ENCODE measurements at regions of chr4 and their contacts with region 1.

Region 1: DNA sequence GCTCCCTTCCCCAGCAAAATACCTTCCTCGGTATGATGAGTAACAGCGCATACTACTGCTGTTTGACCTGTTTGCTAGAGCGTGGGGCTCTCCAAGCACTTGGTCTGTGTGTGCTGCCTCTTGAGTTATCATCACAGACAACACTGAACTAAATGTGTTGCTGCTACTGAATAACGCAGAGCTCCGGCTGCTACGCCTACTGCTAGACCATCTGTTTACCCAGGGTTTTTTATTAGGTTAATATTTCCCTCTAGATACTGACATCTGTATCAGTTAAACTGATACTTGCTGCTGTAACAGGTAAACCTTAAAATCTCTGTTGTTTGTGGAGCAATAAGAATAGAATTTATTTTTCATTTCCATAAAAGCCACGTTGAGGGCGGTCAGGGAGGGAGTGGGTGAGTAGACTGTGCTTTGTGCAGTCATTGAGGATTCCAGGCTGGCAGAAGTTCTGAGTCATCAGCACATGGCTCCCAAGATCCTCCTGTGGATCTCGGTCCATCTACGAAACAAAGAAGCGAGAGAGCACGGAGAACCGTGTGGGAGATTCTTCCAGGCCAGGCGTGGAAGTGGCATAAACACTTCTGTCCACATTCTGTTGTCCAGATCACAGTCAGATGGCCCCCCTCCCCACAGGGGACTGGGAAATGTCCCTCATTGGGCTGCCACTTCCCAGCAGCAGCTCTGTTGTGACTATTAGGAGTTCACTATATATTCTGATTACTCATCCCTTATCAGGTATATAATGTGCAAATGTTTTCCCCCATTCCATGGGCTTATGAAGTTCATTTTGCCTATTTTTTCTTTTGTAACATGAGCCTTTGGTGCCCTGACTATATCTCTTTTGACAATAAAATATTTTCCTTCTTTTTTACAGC is 14.1 kb downstream of the GRK4 start:
- DNase-seq: no peak
- H3K4me3 Mint-ChIP-seq: no peak overlapping the region
- H3K27ac Mint-ChIP-seq: no peak overlapping the region
- H3K4me1 Mint-ChIP-seq: no peaks in the 10 kb centered on the region
- H3K27me3 Mint-ChIP-seq: no peaks in the 10 kb centered on the region

Region 2: DNA sequence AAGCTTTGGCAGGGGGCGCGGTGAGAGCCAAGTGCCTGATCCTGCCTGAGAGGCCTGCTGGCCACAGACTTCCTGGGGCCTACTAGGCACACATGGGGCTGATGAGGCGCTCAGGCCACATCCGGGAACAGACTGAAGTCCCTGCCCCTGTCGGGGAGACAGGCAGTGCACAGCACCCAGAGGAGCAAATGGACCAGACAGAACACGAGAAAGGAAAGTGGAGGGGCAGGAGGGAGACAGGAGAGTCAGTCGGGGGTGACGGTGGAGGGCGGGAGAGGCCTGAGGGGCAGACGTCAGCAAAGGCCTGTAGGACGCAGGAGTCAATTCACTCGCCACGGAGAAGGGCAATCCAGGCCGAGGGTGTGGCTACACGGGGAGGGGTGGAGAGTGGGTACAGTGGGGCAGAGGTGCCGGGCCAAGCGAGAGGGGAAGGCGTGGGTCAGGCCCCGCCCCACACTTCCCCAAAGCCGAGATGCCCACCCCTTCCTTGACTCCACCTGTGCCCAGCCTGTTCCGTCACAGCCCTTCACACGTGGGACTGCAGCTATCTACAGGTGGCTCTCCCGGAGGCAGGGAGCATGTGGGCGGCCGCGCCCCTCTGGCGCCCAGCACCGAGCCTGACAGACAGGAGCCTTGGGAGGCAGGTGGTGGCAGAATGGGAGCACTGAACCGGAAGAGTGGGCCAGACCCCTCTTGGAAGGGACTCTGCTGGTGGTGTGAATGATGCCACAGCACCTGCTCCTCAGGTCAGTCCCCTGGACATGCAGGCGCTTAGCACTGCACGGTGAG is 34.7 kb before region 1 on chr4:
- CTCF ChIA-PET with region 1: no interaction called
- POLR2A ChIA-PET with region 1: no interaction called
- DNase-seq: no peak
- H3K4me3 Mint-ChIP-seq: no peak overlapping the region
- H3K27ac Mint-ChIP-seq: peak overlapping the region; percentile 71
- H3K4me1 Mint-ChIP-seq: peaks cover 15% of the 10 kb centered on the region
- H3K27me3 Mint-ChIP-seq: no peaks in the 10 kb centered on the region

Region 3: DNA sequence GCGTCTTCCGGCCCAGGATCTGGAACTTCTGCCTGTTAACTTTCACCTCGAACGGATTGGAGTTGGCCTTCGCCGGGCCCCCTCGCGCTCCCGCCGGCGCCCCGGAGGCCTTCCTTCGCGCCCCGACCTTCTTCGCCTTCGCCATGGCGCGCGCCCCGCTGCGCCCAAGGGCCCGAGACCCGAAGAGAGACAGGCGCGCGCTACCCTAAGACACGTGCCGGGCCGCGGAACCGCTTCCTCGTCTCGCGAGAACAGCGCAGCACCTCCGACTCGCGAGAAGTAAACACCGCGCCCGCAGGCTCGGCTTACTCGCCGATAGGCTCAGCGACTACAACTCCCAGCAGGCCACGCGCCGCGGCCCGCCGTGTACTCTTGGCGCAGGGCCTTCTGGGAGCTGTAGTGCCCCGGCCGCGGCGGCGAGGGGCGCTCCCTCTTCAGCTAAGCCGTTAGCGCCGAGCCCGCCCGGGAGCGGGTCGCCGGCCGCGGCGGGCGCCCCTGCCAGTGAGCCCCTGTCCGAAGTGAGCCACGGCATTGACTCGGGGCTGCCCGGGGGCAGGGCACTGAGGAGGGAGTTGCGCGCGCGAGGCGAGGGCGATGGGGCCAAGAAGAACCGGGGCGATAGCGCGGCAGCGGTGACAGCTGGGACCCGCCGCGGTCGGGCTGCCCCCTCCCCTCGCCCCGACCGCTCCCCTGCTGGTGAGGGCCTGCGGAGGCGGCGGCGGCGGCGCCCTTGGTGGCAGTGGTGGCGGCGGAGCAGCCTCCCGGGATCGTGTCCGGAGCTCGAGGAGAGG is 14.1 kb before region 1 on chr4 and contains the starts of genes GRK4 and NOP14:
- CTCF ChIA-PET with region 1: interaction called, 10 read pairs
- POLR2A ChIA-PET with region 1: no interaction called
- DNase-seq: peak; percentile 98
- H3K4me3 Mint-ChIP-seq: peak within 1 kb of the TSS; percentile 81
- H3K27ac Mint-ChIP-seq: peak within 1 kb of the TSS; percentile 83
- H3K4me1 Mint-ChIP-seq: peaks cover 35% of the 10 kb centered on the region
- H3K27me3 Mint-ChIP-seq: peaks cover 3% of the 10 kb centered on the region
- total RNA-seq, gene GRK4: 2.5 to 5.2 TPM
- total RNA-seq, gene NOP14: 49.1 to 50.7 TPM

Region 4: GRCh38 chr4:2991243-2991642 is 13.8 kb after region 1 on chr4:
- CTCF ChIA-PET with region 1: interaction called, 11 read pairs
- POLR2A ChIA-PET with region 1: no interaction called
- DNase-seq: no peak
- H3K4me3 Mint-ChIP-seq: no peak overlapping the region
- H3K27ac Mint-ChIP-seq: no peak overlapping the region
- H3K4me1 Mint-ChIP-seq: no peaks in the 10 kb centered on the region
- H3K27me3 Mint-ChIP-seq: peaks cover 8% of the 10 kb centered on the region